SK-N-SH (cell line): ENCODE measurements at regions of chr17 and their contacts with region 1.

Region 1: GRCh38 chr17:4304417-4305027 is 40.7 kb upstream of the ANKFY1 start:
- DNase-seq: peak; percentile 68
- H3K4me3 ChIP-seq: peak overlapping the region in 1 of 2 experiments; percentile 20; a peak in 1 of 4 replicates
- H3K27ac ChIP-seq: 0 out of 4 replicates have a peak overlapping the region, but pooled peaks of 1 of the 2 experiments have one; percentile 8
- H3K4me1 ChIP-seq: no peaks in the 10 kb centered on the region; a peak in 1 of 4 replicates
- H3K27me3 ChIP-seq: no peaks in the 10 kb centered on the region
- CTCF ChIP-seq: peak; percentile 93
- EP300 ChIP-seq: no peak
- RAD21 ChIP-seq: peak; percentile 56

Region 2: DNA sequence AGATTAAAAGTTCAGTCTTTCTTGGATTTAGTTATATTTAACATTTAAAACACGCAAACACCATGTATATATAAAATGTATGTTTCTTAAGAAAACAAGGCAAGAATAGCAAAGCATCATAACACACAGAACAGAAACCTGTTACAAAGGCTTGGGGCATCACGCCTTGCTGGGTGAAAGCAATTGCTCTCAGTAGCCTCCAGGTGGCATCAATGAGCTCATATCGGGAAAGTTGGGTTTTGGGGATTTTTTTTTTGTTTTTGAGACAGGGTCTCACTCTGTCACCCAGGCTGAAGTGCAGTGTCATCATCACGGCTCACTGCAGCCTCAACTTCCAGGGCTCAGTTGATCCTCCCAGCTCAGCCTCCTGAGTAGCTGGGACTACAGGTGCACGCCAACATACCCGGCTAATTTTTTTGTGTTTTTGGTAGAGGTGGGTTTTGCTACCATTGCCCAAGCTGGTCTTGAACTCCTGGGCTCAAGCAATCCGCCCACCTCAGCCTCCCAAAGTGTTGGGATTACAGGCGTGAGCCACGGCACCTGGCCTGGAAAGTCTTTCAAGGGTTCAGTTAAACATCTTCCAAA is 104.6 kb before region 1 on chr17:
- CTCF ChIA-PET with region 1: interaction called, 12 read pairs
- POLR2A ChIA-PET with region 1: no interaction called
- DNase-seq: peak; percentile 77
- H3K4me3 ChIP-seq: no peak overlapping the region
- H3K27ac ChIP-seq: no peak overlapping the region
- H3K4me1 ChIP-seq: peaks cover 0 to 6% of the 10 kb centered on the region in 2 experiments; a peak in 1 of 4 replicates
- H3K27me3 ChIP-seq: no peaks in the 10 kb centered on the region
- CTCF ChIP-seq: peak; percentile 83
- EP300 ChIP-seq: no peak
- RAD21 ChIP-seq: peak; percentile 56

Region 3: GRCh38 chr17:4236456-4236855 is 68.1 kb before region 1 on chr17:
- CTCF ChIA-PET with region 1: no interaction called
- POLR2A ChIA-PET with region 1: no interaction called
- DNase-seq: peak; percentile 24
- H3K4me3 ChIP-seq: no peak overlapping the region
- H3K27ac ChIP-seq: peak overlapping the region in 1 of 2 experiments; percentile 98; a peak in 3 of 4 replicates
- H3K4me1 ChIP-seq: peaks cover 3 to 31% of the 10 kb centered on the region in 2 experiments; a peak in 3 of 4 replicates
- H3K27me3 ChIP-seq: no peaks in the 10 kb centered on the region
- CTCF ChIP-seq: no peak
- EP300 ChIP-seq: no peak
- RAD21 ChIP-seq: no peak

Region 4: DNA sequence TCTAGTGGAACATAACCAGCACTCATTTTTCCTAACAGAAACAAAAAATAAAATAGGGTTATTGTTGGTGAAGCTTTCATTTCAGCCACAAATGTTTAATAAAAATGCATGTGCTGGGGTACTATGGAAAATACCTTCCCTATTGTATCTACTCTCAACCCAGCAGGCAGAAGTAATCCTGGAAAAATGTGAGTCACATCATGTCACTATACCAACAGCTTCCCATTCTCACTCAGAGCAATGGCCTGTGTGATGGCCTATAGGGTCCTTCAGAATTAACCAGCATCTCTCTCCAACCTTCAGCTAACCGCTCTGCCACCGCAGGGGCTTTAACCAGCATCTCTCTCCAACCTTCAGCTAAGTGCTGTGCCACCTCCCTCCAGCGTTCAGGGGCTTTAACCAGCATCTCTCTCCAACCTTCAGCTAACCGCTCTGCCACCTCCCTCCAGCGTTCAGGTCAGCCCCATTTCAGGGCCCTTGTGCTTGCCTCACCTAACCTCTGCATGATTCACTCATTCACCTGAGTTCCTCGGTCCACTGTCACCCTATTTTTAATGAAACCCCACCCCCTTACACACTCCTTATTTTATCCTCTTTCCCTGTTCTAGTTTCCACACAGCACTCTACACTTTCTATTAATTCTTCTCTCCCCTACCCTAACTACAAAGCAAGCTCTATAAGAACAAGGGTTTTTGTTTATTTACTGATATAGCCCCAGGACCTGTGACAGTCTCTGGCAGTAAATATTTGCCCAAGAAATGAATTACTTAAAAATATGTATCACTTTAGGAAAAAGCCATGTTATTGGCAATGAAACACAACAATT is 28.0 kb after region 1 on chr17:
- CTCF ChIA-PET with region 1: interaction called, 10 read pairs
- POLR2A ChIA-PET with region 1: no interaction called
- DNase-seq: no peak
- H3K4me3 ChIP-seq: no peak overlapping the region
- H3K27ac ChIP-seq: peak overlapping the region in 1 of 2 experiments; percentile 60; a peak in 2 of 4 replicates
- H3K4me1 ChIP-seq: peaks cover 5 to 27% of the 10 kb centered on the region in 2 experiments; a peak in 2 of 4 replicates
- H3K27me3 ChIP-seq: no peaks in the 10 kb centered on the region
- CTCF ChIP-seq: no peak
- EP300 ChIP-seq: no peak
- RAD21 ChIP-seq: no peak

Region 5: GRCh38 chr17:4498461-4499397 is 194.2 kb after region 1 on chr17 and contains the start of gene SPNS2:
- CTCF ChIA-PET with region 1: no interaction called
- POLR2A ChIA-PET with region 1: no interaction called
- DNase-seq: peak; percentile 97
- H3K4me3 ChIP-seq: peak within 1 kb of the TSS in 1 of 2 experiments; percentile 25; a peak in 1 of 4 replicates
- H3K27ac ChIP-seq: no peak within 1 kb of the TSS
- H3K4me1 ChIP-seq: peaks cover 0 to 3% of the 10 kb centered on the region in 2 experiments; a peak in 1 of 4 replicates
- H3K27me3 ChIP-seq: peaks cover 35% of the 10 kb centered on the region
- CTCF ChIP-seq: no peak
- EP300 ChIP-seq: no peak
- RAD21 ChIP-seq: no peak
- polyA plus RNA-seq, gene SPNS2: 0.08 TPM in 1 of 2 replicates, not detected in the other

Region 6: DNA sequence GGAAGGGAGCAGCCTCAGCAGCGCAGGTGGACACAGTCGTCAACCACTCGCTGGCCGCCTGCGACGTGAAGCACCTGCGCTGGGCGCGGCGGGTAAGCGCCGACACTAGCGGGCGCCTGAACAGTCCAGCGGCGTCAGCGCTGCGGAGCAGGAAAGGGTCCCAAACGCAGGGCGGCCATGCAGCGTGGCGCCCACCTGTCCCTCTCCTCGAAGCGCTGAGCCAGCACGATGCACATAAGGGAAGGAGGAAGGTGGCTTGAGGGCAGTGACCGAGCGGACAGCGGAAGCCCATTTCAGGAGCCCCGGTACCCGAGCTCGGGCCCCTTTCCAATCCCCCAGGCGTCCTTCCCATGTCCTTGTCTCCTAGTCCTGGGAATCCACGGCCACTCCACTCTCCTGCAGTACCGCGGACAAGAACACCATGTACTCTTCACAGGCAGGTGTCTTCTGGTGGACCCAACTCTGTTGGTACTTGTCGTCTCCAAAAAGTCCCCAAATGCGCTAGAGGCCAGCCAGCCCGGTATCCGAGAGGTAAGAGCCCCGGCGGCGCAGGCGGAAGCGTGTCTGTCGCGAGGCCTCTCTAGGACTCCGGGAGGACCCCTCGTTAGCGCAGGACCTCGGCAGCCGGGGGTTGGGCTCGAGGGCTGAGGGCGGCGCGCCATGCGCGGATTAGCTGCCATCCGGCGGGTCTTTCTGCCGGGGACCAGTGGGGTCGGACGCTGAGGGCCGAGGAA is 792.7 kb after region 1 on chr17:
- CTCF ChIA-PET with region 1: no interaction called
- POLR2A ChIA-PET with region 1: no interaction called
- DNase-seq: peak; percentile 72
- H3K4me3 ChIP-seq: peak overlapping the region in 1 of 2 experiments; percentile 23; a peak in 1 of 4 replicates
- H3K27ac ChIP-seq: no peak overlapping the region
- H3K4me1 ChIP-seq: no peaks in the 10 kb centered on the region
- H3K27me3 ChIP-seq: no peaks in the 10 kb centered on the region
- CTCF ChIP-seq: no peak
- EP300 ChIP-seq: no peak
- RAD21 ChIP-seq: no peak